ENCODE measurements at regions of chr1 and their contacts with region 1.

Region 1: DNA sequence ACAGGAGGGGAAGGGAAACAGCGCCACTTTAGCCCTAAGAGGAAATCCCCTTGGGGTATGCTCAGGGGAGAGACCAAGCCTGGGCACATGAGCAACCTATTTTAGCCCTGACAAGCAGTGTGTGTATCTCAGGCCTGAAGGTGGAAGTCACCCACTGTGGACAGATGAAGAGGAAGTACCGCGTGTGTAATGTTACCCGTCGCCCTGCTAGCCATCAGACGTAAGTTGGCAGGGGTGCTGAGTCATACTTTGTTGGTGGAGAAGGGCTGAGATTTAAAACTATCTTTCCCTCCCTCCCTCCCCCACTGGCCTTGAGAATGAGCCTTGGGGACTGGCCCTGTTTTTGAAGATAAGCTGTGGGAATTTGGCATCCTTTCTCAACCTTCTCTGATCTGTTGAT is 11.2 kb downstream of the AGO1 start:
- DNase-seq: no peak
- H3K4me3 Mint-ChIP-seq: no peak overlapping the region
- H3K27ac Mint-ChIP-seq: no peak overlapping the region
- H3K4me1 Mint-ChIP-seq: no peaks in the 10 kb centered on the region
- H3K27me3 Mint-ChIP-seq: no peaks in the 10 kb centered on the region
- CTCF ChIP-seq: no peak

Region 2: DNA sequence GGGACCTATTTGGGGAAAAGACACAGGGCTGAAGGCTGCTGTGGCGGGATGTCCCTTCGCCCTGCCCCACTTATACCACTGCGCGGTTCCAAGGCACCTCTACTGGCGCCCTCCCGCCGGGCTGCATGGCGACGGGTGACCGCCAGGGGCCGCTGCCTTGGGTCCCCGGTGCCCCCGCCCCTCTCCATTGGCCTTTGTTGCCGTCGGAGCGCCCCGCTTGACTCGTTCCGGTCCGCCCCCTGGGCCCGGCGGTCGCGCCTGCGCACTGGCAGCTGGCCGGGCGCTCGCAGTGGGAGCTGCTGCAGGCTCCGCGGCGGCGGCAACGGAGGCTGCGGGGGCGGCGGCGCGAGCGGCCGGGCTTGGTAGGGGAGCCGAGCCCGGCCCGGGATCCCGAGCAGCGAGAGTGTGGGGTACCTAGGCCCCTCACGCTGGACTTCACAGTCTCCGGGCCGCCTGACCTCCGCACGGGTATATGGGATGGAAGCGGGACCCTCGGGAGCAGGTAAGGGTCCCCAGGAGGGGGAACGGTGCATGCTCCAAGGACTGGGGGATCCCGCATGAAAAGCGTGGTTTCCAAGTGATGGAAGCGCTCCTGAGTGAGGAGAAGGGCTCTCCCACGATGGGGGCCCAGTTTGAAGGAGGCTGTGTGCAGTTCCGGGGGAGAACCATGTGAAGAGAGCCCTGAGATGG is 11.1 kb before region 1 on chr1 and contains the start of gene AGO1:
- CTCF ChIA-PET with region 1: interaction called, 22 read pairs
- POLR2A ChIA-PET with region 1: no interaction called
- intact Hi-C with region 1: no loop called
- DNase-seq: peak; percentile 94
- H3K4me3 Mint-ChIP-seq: peak within 1 kb of the TSS; percentile 94
- H3K27ac Mint-ChIP-seq: peak within 1 kb of the TSS; percentile 90
- H3K4me1 Mint-ChIP-seq: peaks cover 18% of the 10 kb centered on the region
- H3K27me3 Mint-ChIP-seq: no peaks in the 10 kb centered on the region
- CTCF ChIP-seq: peak; percentile 88
- total RNA-seq, gene AGO1: 13.5 and 15.7 TPM in 2 replicates

Region 3: DNA sequence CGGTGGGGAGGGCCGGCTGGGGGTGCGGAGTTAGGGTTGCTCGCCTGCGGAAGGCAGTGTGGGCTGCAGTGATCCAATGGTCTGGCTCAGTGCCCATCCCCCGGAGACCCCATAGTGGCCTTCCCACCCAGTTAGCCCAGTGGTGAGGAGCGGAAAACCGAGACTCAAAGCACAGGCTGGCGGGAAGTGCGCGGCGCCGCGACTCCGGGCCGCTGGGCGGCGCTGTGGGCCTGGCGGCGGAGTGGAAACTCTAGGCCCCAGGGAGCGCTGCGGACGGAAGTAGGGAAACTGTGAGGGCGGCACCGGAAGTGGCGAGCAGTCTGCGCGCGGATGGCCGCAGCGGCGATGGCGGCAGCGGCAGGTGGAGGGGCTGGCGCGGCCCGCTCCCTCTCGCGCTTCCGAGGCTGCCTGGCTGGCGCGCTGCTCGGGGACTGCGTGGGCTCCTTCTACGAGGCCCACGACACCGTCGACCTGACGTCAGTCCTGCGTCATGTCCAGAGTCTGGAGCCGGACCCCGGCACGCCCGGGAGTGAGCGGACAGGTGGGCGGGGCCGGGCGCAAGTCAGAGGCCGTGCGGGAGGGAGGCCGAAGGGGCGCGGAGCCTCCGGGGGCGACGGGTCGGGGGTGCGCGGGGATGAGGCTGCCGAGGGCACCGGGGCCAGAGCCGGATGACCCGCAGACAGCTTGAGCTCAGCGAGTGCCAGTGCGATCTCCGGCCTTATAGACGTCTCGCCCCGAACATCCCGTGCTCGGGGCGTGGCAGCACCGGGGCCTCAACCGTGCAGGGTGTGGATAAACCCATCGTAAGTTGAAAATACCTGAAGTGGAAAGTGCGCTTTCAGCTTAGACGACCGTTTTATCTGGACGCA is 194.6 kb after region 1 on chr1 and contains the start of gene ADPRS:
- CTCF ChIA-PET with region 1: no interaction called
- POLR2A ChIA-PET with region 1: no interaction called
- intact Hi-C with region 1: no loop called
- DNase-seq: peak; percentile 82
- H3K4me3 Mint-ChIP-seq: peak within 1 kb of the TSS; percentile 75
- H3K27ac Mint-ChIP-seq: peak within 1 kb of the TSS; percentile 82
- H3K4me1 Mint-ChIP-seq: no peaks in the 10 kb centered on the region
- H3K27me3 Mint-ChIP-seq: no peaks in the 10 kb centered on the region
- CTCF ChIP-seq: peak; percentile 99
- total RNA-seq, gene ADPRS: 24.8 and 26.4 TPM in 2 replicates

Measured in MCF 10A (cell line).